HEK293 (cell line): ENCODE measurements at regions of chr12 and their contacts with region 1.

Region 1: DNA sequence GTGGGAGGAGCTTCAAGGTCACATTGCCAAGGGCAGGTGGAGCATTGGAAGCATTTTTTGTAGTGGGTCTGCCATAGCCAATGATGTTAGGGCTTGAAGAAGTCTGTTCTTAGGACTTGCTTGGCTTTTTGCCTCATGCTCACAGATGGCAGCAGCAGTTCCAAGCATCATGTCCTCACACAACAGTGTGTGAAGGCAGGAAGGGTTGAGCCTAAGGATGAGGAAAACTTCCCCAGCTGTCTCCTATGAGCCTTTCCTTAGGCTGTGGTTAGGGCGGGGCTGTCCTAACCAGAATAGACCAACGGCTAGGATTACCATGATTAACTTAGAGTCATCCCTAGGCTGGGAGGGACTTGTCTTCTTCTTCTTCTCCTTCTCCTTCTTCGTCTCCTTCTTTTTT is 76.2 kb upstream of the KCNA1 start:
- H3K4me3 ChIP-seq: no peak overlapping the region
- H3K27ac ChIP-seq: no peak overlapping the region
- H3K4me1 ChIP-seq: no peaks in the 10 kb centered on the region
- CTCF ChIP-seq: no peak

Region 2: DNA sequence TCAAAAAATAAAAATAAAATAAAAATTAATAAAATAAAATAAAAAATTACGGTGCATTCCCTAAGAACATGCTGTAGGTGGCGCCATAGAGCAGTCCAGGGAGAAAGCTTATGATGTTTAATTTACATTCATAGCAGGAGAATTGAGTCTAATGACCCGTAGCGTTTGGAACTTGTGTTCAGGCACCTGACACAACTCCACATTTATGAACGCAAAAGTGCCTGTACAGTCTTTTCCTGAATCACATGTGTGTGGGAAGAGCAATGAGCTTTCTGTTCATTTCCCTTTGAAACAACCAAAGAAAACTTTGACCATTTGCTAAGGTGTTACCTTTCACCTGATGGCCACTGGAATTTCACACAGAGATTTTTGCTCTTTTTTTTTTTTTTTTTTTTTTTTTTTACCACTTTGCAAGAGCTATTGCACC is 15.6 kb after region 1 on chr12:
- CTCF ChIA-PET with region 1: interaction called, 11 read pairs
- POLR2A ChIA-PET with region 1: no interaction called
- H3K4me3 ChIP-seq: no peak overlapping the region
- H3K27ac ChIP-seq: no peak overlapping the region
- H3K4me1 ChIP-seq: no peaks in the 10 kb centered on the region
- CTCF ChIP-seq: no peak

Region 3: DNA sequence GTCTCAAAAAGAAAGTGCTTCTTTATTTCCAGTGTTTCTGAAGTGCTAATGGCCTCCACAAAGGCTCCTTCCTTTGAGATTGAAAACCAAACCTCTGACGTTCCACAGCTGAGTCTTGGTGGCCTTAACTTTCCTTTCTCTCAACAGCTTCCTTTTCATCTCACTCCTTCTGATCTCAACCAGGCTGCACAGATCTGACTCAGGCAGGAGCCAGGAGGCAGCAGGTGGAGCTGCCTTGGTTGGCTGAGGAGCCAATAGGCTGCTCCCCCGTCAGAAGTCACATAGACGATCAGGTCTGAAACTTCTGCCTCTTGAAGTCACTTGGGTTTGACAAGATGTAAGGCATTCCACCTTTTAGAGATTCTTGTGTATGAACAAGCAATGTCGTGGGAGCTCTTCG is 201.1 kb after region 1 on chr12:
- CTCF ChIA-PET with region 1: no interaction called
- POLR2A ChIA-PET with region 1: no interaction called
- H3K4me3 ChIP-seq: no peak overlapping the region
- H3K27ac ChIP-seq: no peak overlapping the region
- H3K4me1 ChIP-seq: no peaks in the 10 kb centered on the region
- CTCF ChIP-seq: no peak

Region 4: GRCh38 chr12:5123921-5124320 is 290.4 kb after region 1 on chr12:
- CTCF ChIA-PET with region 1: no interaction called
- POLR2A ChIA-PET with region 1: no interaction called
- H3K4me3 ChIP-seq: no peak overlapping the region
- H3K27ac ChIP-seq: no peak overlapping the region
- H3K4me1 ChIP-seq: no peaks in the 10 kb centered on the region
- CTCF ChIP-seq: no peak